MCF 10A (cell line): ENCODE measurements at regions of chr14 and their contacts with region 1.

Region 1: DNA sequence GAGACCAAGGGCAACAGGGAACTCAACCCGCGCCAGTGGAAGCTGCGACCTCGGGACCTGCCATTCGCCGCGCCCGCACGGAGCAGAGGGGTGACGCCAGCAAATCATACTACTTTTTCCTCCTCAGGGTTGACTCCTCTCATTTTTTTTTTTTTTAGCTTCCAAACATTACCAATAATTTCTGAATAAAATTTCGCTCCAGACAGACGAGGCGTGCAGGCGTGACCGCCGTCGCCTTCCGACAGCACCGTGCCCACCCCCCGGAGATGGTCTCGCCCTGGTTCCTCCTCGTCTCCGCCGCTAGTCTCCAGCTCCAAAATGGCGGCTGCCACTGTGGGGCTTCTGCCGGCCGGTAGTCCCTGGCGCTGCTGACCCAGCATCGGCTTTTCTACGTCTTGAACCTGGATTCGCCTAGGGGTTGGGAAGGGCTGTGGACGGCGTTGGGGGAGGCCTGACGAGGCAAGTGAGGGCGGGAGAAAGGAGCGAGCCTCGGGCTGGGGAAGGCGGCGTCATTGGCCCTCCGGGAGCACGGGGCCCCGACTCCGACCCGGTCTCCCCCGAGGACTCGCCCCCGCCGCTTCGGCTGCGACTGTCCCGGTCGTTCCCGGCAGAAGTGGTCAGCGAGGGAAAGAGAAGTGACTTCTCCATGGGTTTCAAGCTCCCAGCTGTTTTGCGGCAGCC is at the starts of genes CPSF2 and NDUFB1:
- DNase-seq: peak; percentile 79
- H3K4me3 Mint-ChIP-seq: peak within 1 kb of the TSS; percentile 82
- H3K27ac Mint-ChIP-seq: peak within 1 kb of the TSS; percentile 99
- H3K4me1 Mint-ChIP-seq: peaks cover 18% of the 10 kb centered on the region
- H3K27me3 Mint-ChIP-seq: no peaks in the 10 kb centered on the region
- CTCF ChIP-seq: no peak
- total RNA-seq, gene CPSF2: 116 and 121 TPM in 2 replicates
- total RNA-seq, gene NDUFB1: 130 and 134 TPM in 2 replicates

Region 2: GRCh38 chr14:91681893-91682563 is 439.8 kb before region 1 on chr14:
- CTCF ChIA-PET with region 1: no interaction called
- POLR2A ChIA-PET with region 1: no interaction called
- intact Hi-C with region 1: no loop called
- DNase-seq: no peak
- H3K4me3 Mint-ChIP-seq: no peak overlapping the region
- H3K27ac Mint-ChIP-seq: no peak overlapping the region
- H3K4me1 Mint-ChIP-seq: no peaks in the 10 kb centered on the region
- H3K27me3 Mint-ChIP-seq: no peaks in the 10 kb centered on the region
- CTCF ChIP-seq: no peak

Region 3: DNA sequence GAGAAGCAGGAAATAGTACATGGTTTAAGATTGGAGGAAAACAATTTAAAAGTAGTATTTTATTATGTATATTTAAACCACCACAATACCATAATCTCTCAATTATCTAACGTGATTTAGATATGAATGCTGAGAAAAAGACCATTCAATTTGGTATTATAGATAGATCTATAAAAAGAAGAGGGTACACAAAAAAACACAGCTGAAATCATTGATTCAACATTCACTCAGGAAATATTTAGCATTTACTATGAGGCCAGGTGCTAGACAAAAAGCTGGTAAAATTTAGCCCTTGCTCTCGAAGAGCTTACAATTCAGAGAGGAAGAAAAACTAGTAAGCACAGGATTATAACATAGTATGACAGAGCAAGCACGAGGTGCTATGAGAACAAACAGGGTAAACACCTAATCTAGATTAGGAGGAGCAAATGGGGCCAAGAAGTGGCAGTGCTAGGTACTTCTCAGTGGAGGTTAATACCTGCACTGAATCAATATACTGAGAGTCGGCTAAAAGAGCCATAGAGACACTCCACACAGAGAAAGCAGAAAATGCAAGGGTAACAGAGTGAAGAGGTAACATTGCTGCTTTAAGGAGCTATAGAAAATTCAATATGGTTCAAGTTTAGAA is 109.6 kb before region 1 on chr14:
- CTCF ChIA-PET with region 1: no interaction called
- POLR2A ChIA-PET with region 1: no interaction called
- intact Hi-C with region 1: no loop called
- DNase-seq: no peak
- H3K4me3 Mint-ChIP-seq: no peak overlapping the region
- H3K27ac Mint-ChIP-seq: no peak overlapping the region
- H3K4me1 Mint-ChIP-seq: no peaks in the 10 kb centered on the region
- H3K27me3 Mint-ChIP-seq: no peaks in the 10 kb centered on the region
- CTCF ChIP-seq: no peak

Region 4: GRCh38 chr14:92106143-92106926 is 15.5 kb before region 1 on chr14 and contains the start of gene ATXN3:
- CTCF ChIA-PET with region 1: interaction called, 55 read pairs
- POLR2A ChIA-PET with region 1: interaction called, 176 read pairs
- intact Hi-C with region 1: no loop called
- DNase-seq: peak; percentile 98
- H3K4me3 Mint-ChIP-seq: peak within 1 kb of the TSS; percentile 97
- H3K27ac Mint-ChIP-seq: peak within 1 kb of the TSS; percentile 93
- H3K4me1 Mint-ChIP-seq: peaks cover 24% of the 10 kb centered on the region
- H3K27me3 Mint-ChIP-seq: no peaks in the 10 kb centered on the region
- CTCF ChIP-seq: peak; percentile 52
- total RNA-seq, gene ATXN3: 24.9 and 31.6 TPM in 2 replicates

Region 5: DNA sequence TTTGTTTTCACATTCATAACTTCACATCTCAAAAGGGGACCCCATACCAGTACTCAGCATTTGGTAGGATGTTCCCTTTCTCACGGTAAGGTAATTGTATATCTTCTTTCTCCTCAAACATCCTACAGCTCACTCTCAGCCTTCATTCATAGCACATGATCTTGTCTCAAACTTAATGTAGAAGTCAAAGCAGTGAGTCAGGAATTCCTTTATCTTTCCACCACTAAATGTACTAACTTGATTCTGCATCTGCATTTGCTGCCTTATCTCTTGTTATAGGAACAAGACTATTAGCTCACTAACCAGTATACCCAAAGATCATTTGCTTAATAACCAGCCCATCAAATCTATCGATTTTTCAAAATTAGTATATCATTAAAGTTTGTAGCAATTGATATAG is 22.9 kb after region 1 on chr14:
- CTCF ChIA-PET with region 1: no interaction called
- POLR2A ChIA-PET with region 1: no interaction called
- intact Hi-C with region 1: no loop called
- DNase-seq: no peak
- H3K4me3 Mint-ChIP-seq: no peak overlapping the region
- H3K27ac Mint-ChIP-seq: peak overlapping the region; percentile 3
- H3K4me1 Mint-ChIP-seq: no peaks in the 10 kb centered on the region
- H3K27me3 Mint-ChIP-seq: no peaks in the 10 kb centered on the region
- CTCF ChIP-seq: no peak

Region 6: DNA sequence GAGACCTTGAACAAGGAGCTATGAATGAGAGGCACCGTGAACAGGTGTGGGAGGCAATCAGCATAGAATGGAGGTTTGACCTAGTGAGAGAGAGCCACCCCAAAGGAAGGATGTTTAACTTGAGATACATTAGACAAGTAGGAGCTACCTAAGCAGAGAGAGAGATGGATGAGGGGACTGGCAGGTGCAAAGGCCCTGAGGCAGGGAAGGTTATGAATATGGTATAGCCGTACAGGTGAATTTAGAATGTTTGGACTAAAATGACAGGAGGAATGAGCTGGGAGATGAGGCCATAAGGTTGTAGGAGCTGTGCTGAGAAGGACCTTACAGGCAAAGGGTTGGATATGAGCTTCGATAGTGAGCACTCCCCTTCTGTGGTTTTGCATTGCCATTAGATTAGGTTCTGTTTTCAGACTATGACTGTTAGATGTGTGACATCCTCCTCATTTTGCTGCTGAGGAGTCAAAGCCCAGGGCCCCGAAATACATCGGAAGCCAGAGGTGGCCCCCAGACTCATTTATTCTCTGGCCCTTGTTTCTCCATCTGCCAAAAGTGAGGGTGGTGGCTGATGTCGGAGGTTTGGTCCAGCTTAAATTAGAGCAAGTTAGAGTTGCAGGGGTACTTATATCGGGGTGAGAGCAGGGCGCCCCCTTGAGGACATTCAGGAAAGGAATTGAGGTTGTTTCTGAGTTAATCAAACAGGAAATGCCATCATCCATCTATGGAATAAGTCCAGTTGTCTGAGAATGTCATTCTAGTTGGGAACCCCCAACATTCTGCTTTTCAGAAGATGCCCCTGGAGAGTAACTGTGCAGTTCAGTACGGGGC is 230.6 kb after region 1 on chr14:
- CTCF ChIA-PET with region 1: no interaction called
- POLR2A ChIA-PET with region 1: no interaction called
- intact Hi-C with region 1: no loop called
- DNase-seq: peak; percentile 47
- H3K4me3 Mint-ChIP-seq: no peak overlapping the region
- H3K27ac Mint-ChIP-seq: no peak overlapping the region
- H3K4me1 Mint-ChIP-seq: no peaks in the 10 kb centered on the region
- H3K27me3 Mint-ChIP-seq: peaks cover 22% of the 10 kb centered on the region
- CTCF ChIP-seq: peak; percentile 20